Activated CD4-positive, alpha-beta T cell treated with anti-CD3 and anti-CD28 coated beads for 36 hours (primary cell): ENCODE measurements at regions of chr17 and their contacts with region 1.

Region 1: GRCh38 chr17:73231841-73232586 is 29.7 kb downstream of the CPSF4L start:
- DNase-seq: peak; percentile 98
- ATAC-seq: peak; percentile 91
- H3K4me3 Mint-ChIP-seq: peak overlapping the region; percentile 81
- H3K27ac Mint-ChIP-seq: peak overlapping the region; percentile 96
- H3K4me1 Mint-ChIP-seq: peaks cover 58% of the 10 kb centered on the region
- H3K27me3 Mint-ChIP-seq: no peaks in the 10 kb centered on the region

Region 2: GRCh38 chr17:72725433-72726068 is 506.5 kb before region 1 on chr17:
- CTCF ChIA-PET with region 1: interaction called, 9 read pairs
- POLR2A ChIA-PET with region 1: no interaction called
- intact Hi-C with region 1: loop called (anchors 2 kb)
- DNase-seq: peak; percentile 75
- ATAC-seq: peak; percentile 50
- H3K4me3 Mint-ChIP-seq: no peak overlapping the region
- H3K27ac Mint-ChIP-seq: peak overlapping the region; percentile 76
- H3K4me1 Mint-ChIP-seq: peaks cover 36% of the 10 kb centered on the region
- H3K27me3 Mint-ChIP-seq: no peaks in the 10 kb centered on the region

Region 3: GRCh38 chr17:73092523-73093135 is 139.4 kb before region 1 on chr17 and contains the start of gene SLC39A11:
- CTCF ChIA-PET with region 1: no interaction called
- POLR2A ChIA-PET with region 1: no interaction called
- intact Hi-C with region 1: loop called (anchors 1 to 2 kb)
- DNase-seq: peak; percentile 95
- ATAC-seq: peak; percentile 99
- H3K4me3 Mint-ChIP-seq: peak within 1 kb of the TSS; percentile 94
- H3K27ac Mint-ChIP-seq: peak within 1 kb of the TSS; percentile 87
- H3K4me1 Mint-ChIP-seq: peaks cover 24% of the 10 kb centered on the region
- H3K27me3 Mint-ChIP-seq: peaks cover 2% of the 10 kb centered on the region
- total RNA-seq, gene SLC39A11: 12.5 to 17.2 TPM

Region 4: DNA sequence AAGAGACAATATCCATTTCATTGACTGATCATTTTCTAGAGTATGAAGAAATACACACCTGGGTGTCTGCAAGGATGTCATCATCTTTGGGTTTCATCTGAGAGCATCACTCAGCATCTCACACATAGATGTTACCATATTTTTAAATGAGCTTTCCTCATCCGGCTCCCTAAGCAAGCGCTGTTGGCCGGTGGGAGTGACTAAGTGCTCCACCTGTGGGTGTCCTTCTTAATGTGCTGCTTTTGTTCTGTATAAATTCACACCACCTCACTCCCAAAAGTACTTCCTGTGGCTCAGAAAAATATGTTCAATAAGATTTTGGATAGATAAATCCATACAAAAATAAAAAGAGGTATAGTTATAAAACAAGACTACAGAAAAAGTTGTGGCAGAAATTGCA is 59.8 kb before region 1 on chr17:
- CTCF ChIA-PET with region 1: no interaction called
- POLR2A ChIA-PET with region 1: no interaction called
- intact Hi-C with region 1: no loop called
- DNase-seq: no peak
- ATAC-seq: peak; percentile 44
- H3K4me3 Mint-ChIP-seq: no peak overlapping the region
- H3K27ac Mint-ChIP-seq: no peak overlapping the region
- H3K4me1 Mint-ChIP-seq: peaks cover 10% of the 10 kb centered on the region
- H3K27me3 Mint-ChIP-seq: peaks cover 12% of the 10 kb centered on the region

Region 5: DNA sequence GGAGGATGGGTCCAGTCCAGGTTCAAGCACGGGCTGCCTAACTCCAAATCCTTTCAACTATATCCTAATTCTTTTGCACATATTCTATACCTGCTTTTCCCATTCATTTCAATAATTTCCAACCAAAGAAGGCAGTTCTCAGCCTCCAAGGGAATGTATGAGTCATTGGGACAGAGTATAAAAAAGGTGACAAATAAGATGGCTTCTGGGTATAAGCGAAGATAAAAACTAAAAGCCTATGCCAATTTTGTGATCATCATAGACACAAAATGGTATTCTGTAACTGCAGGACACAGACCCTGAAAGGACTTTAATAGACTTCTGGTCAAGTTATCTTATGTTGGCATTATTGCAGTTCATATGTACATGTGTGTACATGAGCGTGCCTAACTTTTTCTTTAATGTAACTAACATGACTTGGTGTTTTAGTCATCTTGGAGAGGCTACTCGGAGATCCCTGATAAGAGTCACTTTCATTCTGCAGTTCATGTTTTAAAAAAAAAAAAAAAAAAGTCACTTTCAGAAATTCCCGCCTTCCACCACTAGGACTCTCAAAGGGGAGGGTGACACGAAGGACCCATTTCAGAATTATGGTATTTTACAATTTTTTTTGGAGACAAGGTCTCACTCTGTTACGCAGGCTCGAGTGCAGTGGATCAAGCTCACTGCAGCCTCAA is 21.9 kb before region 1 on chr17:
- CTCF ChIA-PET with region 1: interaction called, 21 read pairs
- POLR2A ChIA-PET with region 1: no interaction called
- intact Hi-C with region 1: loop called (anchors 2 kb)
- DNase-seq: no peak
- ATAC-seq: peak; percentile 42
- H3K4me3 Mint-ChIP-seq: no peak overlapping the region
- H3K27ac Mint-ChIP-seq: peak overlapping the region; percentile 69
- H3K4me1 Mint-ChIP-seq: peaks cover 24% of the 10 kb centered on the region
- H3K27me3 Mint-ChIP-seq: no peaks in the 10 kb centered on the region

Region 6: GRCh38 chr17:73311781-73312641 is 80.0 kb after region 1 on chr17 and contains the start of gene CDC42EP4:
- CTCF ChIA-PET with region 1: interaction called, 4 read pairs
- POLR2A ChIA-PET with region 1: no interaction called
- intact Hi-C with region 1: loop called (anchors 1 to 2 kb)
- DNase-seq: peak; percentile 93
- ATAC-seq: peak; percentile 95
- H3K4me3 Mint-ChIP-seq: peak within 1 kb of the TSS; percentile 80
- H3K27ac Mint-ChIP-seq: no peak within 1 kb of the TSS
- H3K4me1 Mint-ChIP-seq: peaks cover 10% of the 10 kb centered on the region
- H3K27me3 Mint-ChIP-seq: peaks cover 2% of the 10 kb centered on the region
- total RNA-seq, gene CDC42EP4: 0.87 to 0.91 TPM

Region 7: GRCh38 chr17:73639322-73639721 is 407.3 kb after region 1 on chr17:
- CTCF ChIA-PET with region 1: no interaction called
- POLR2A ChIA-PET with region 1: no interaction called
- intact Hi-C with region 1: no loop called
- DNase-seq: no peak
- ATAC-seq: no peak
- H3K4me3 Mint-ChIP-seq: no peak overlapping the region
- H3K27ac Mint-ChIP-seq: no peak overlapping the region
- H3K4me1 Mint-ChIP-seq: peaks cover 14% of the 10 kb centered on the region
- H3K27me3 Mint-ChIP-seq: peaks cover 6% of the 10 kb centered on the region